ENCODE measurements at regions of chr20 and their contacts with region 1.

Region 1: DNA sequence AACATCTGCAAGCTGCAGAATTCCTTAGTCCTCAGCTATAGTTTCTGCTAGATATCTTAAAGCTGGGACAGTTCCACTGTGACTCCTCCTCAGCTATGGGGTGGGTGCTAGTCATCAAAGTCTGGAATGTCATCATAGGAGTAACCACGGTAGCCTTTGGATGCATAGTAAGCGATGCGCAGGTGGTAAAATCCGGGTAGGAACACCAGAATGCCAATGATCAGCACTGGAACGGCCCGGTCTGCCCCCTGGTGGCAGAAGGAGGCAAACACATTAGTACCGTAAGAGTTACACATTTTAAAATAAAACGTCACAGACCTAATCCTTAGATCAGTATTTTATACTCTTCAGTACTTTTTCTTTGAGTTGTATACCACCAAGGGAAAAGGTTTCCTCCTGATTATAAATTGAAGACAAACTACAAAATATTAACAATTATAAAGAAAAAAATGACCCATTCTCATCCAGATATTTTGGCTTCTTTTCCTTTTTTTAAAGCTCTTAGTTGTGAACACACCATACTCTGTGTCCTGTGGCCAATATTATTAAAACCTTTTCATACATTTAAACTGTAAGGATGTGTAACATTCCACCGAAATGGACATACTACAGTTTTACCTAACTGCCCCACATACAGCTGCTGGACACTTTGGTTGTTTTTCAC is 18.9 kb downstream of the PCNA start:
- DNase-seq: peak; percentile 39
- ATAC-seq: peak; percentile 94
- H3K4me3 ChIP-seq: no peak overlapping the region
- H3K27ac ChIP-seq: peak overlapping the region; percentile 41; the same call in 1 of the 2 replicates
- H3K4me1 ChIP-seq: no peaks in the 10 kb centered on the region
- H3K27me3 ChIP-seq: no peaks in the 10 kb centered on the region
- CTCF ChIP-seq: peak; percentile 71 to 87 (median 73)
- POLR2A ChIP-seq: no peak
- RAD21 ChIP-seq: peak; percentile 85

Region 2: GRCh38 chr20:5056801-5057599 is 43.8 kb before region 1 on chr20:
- CTCF ChIA-PET with region 1: interaction called, 9 read pairs
- POLR2A ChIA-PET with region 1: no interaction called
- RAD21 ChIA-PET with region 1: interaction called in 1 of 2 experiments, 3 read pairs
- intact Hi-C with region 1: loop called (anchors 1 kb)
- DNase-seq: peak; percentile 26
- ATAC-seq: peak; percentile 77
- H3K4me3 ChIP-seq: no peak overlapping the region
- H3K27ac ChIP-seq: no peak overlapping the region
- H3K4me1 ChIP-seq: peaks cover 12 to 30% of the 10 kb centered on the region in 2 experiments
- H3K27me3 ChIP-seq: no peaks in the 10 kb centered on the region
- CTCF ChIP-seq: peak; percentile 49 to 74 (median 68); a peak in 5 of 6 replicates
- POLR2A ChIP-seq: no peak
- RAD21 ChIP-seq: peak; percentile 53

Region 3: GRCh38 chr20:5191829-5192569 is 91.2 kb after region 1 on chr20:
- CTCF ChIA-PET with region 1: interaction called, 11 read pairs
- POLR2A ChIA-PET with region 1: no interaction called
- RAD21 ChIA-PET with region 1: no interaction called
- intact Hi-C with region 1: no loop called
- DNase-seq: peak; percentile 51
- ATAC-seq: peak; percentile 82
- H3K4me3 ChIP-seq: no peak overlapping the region
- H3K27ac ChIP-seq: peak overlapping the region; percentile 15; the same call in 1 of the 2 replicates
- H3K4me1 ChIP-seq: no peaks in the 10 kb centered on the region
- H3K27me3 ChIP-seq: no peaks in the 10 kb centered on the region
- CTCF ChIP-seq: peak; percentile 66 to 85 (median 74)
- POLR2A ChIP-seq: no peak
- RAD21 ChIP-seq: peak; percentile 93

Measured in HCT116 (cell line).